ENCODE measurements at regions of chr2 and their contacts with region 1.

Region 1: GRCh38 chr2:201071479-201072200 is at the starts of genes HYCC2 and NDUFB3:
- DNase-seq: peak; percentile 94

Region 2: DNA sequence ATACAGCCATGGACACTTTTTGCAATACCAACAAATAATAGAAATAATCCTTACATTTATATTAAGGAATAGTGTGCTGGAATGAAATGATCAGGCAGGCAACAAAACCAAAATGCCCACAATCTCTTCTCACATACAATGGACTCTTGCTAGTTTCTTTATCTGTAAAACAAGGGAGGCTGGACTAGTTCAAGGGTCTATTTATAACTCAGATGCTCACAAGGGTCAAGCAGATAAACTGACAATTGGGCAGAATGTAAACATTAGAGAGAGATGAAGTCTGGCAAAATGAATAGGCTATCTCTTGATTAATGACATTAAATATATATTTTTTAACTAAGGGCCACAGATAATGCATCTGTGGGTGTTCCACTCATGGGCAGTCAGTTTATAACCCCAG is 194.2 kb before region 1 on chr2:
- CTCF ChIA-PET with region 1: no interaction called
- POLR2A ChIA-PET with region 1: no interaction called
- DNase-seq: no peak

Region 3: GRCh38 chr2:200905618-200906296 is 165.9 kb before region 1 on chr2:
- CTCF ChIA-PET with region 1: interaction called, 22 read pairs
- POLR2A ChIA-PET with region 1: interaction called, 3 read pairs
- DNase-seq: peak; percentile 62

Region 4: GRCh38 chr2:200963124-200963917 is 108.3 kb before region 1 on chr2 and contains the start of gene ORC2:
- CTCF ChIA-PET with region 1: interaction called, 10 read pairs
- POLR2A ChIA-PET with region 1: interaction called, 32 read pairs
- DNase-seq: peak; percentile 93

Region 5: GRCh38 chr2:201049455-201049854 is 22.2 kb before region 1 on chr2:
- CTCF ChIA-PET with region 1: no interaction called
- POLR2A ChIA-PET with region 1: no interaction called
- DNase-seq: no peak

Region 6: DNA sequence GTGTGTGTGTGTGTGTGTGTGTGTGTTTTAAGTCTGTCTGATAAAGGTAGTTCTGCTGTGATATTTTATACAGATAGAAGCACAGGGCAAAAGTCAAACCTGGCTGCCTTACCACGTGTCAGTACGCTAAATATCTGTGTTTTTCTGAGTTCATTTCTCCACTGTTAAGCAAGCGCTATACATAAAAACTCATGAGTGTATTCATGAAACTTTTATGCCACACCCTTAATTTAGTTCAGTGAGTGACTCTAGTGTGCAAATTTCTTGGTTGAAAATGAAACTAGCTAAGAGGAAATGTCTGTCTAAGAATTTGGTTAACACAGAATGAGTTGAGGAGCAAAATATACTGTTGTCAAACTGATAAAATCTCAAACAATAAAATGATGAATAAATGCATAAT is 122.5 kb after region 1 on chr2:
- CTCF ChIA-PET with region 1: no interaction called
- POLR2A ChIA-PET with region 1: no interaction called
- DNase-seq: no peak

Region 7: DNA sequence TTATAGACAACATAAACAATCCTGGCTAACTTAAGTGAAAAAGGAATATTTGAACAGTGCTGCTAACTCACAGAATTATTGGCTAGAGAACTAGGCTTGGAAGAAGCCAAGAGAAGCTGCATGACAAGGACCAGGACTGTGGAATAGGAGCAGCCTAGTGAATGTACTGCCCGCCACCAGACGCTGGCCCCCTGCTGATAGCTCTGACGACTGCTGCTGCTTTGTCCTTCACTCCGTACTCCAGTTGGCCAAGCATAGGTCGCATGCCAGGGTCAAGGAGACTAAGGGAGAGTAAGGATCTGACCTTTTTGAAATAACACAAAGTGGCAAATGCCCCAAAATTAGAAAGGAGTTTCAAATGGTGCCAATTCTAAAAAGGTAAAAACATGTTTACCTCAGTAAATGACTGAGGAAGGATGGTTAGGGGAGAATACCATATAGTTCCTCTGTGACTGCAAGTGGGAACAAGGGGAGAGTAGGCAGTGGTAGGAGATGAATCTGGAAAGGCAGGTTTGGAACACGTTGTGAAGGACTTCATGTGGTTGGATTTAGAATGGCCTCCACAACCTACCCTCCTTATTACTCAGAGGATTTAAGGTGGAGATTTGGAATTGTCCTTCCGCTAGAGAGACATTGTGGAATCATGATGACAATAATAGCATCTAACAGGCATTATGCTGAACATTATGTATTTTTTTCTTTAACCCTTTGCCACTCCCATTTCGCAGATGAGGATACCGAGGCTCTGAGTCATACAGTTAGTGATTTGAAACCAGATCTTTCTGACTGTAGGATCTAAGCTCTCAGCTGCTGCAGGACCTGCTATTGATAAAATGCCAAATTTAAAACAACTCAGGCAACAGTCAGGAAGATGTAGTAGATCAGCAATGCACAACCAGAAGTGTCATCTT is 399.4 kb after region 1 on chr2:
- CTCF ChIA-PET with region 1: no interaction called
- POLR2A ChIA-PET with region 1: no interaction called
- DNase-seq: no peak